ENCODE measurements at regions of chr20 and their contacts with region 1.

Region 1: DNA sequence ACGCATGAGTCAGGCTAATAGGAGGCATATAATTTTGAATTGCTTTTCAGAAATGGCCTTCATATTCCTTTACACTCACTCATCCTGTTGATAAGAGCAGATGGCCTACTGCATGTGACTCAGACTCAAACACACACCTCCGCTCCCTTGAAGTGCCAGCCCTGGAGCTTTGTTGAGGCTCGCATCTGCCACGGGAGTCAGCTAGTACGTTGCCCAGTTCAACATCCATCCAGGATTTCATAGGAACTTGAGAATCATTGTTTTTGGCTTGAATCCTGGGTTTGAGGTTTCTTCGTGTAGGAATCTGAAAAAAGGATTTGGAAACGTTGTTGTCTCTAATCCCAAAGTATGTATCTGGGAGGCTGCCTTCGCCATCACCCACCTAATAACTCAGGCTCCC is 87.4 kb upstream of the JAG1 start:
- DNase-seq: peak; percentile 93
- ATAC-seq: peak; percentile 65
- H3K4me3 ChIP-seq: 0 out of 2 replicates have a peak overlapping the region, but pooled peaks have one; percentile 9
- H3K27ac ChIP-seq: peak overlapping the region; percentile 94
- H3K4me1 ChIP-seq: peaks cover 42% of the 10 kb centered on the region
- H3K27me3 ChIP-seq: no peaks in the 10 kb centered on the region
- CTCF ChIP-seq: no peak

Region 2: GRCh38 chr20:10696650-10697049 is 64.6 kb before region 1 on chr20:
- CTCF ChIA-PET with region 1: no interaction called
- POLR2A ChIA-PET with region 1: no interaction called
- intact Hi-C with region 1: no loop called
- DNase-seq: no peak
- ATAC-seq: no peak
- H3K4me3 ChIP-seq: no peak overlapping the region
- H3K27ac ChIP-seq: no peak overlapping the region
- H3K4me1 ChIP-seq: no peaks in the 10 kb centered on the region
- H3K27me3 ChIP-seq: no peaks in the 10 kb centered on the region
- CTCF ChIP-seq: peak; percentile 86

Region 3: GRCh38 chr20:10708351-10709185 is 52.7 kb before region 1 on chr20:
- CTCF ChIA-PET with region 1: interaction called, 7 read pairs
- POLR2A ChIA-PET with region 1: no interaction called
- intact Hi-C with region 1: loop called (anchors 2 kb)
- DNase-seq: peak; percentile 92
- ATAC-seq: peak; percentile 30
- H3K4me3 ChIP-seq: no peak overlapping the region
- H3K27ac ChIP-seq: peak overlapping the region; percentile 79
- H3K4me1 ChIP-seq: peaks cover 52% of the 10 kb centered on the region
- H3K27me3 ChIP-seq: no peaks in the 10 kb centered on the region
- CTCF ChIP-seq: no peak

Region 4: DNA sequence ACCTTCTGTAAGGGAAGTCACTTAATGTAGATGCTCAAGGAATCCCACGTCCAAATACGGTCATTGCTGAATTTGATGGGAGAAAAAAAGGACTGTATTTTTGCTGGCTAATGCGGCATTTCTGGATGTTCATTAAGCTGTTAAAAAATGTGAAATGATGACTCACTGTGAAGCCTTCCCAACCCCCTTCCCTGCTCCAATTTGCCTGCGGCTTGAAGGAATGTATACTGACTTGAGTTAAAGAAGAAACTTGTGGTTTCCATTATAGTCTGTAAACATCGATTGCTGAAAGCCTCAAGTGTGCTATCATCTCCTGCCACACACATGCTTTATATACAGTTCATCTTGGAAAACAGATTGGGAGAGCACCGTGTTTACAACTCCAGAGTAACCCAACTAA is 161.7 kb after region 1 on chr20:
- CTCF ChIA-PET with region 1: no interaction called
- POLR2A ChIA-PET with region 1: no interaction called
- intact Hi-C with region 1: loop called (anchors 1 kb)
- DNase-seq: peak; percentile 97
- ATAC-seq: peak; percentile 79
- H3K4me3 ChIP-seq: peak overlapping the region; percentile 23; the same call in 1 of the 2 replicates
- H3K27ac ChIP-seq: peak overlapping the region; percentile 69
- H3K4me1 ChIP-seq: peaks cover 64% of the 10 kb centered on the region
- H3K27me3 ChIP-seq: no peaks in the 10 kb centered on the region
- CTCF ChIP-seq: no peak

Region 5: GRCh38 chr20:11020712-11021111 is 259.5 kb after region 1 on chr20:
- CTCF ChIA-PET with region 1: no interaction called
- POLR2A ChIA-PET with region 1: no interaction called
- intact Hi-C with region 1: loop called (anchors 5 kb)
- DNase-seq: peak; percentile 49
- ATAC-seq: peak; percentile 85
- H3K4me3 ChIP-seq: no peak overlapping the region
- H3K27ac ChIP-seq: 0 out of 2 replicates have a peak overlapping the region, but pooled peaks have one; percentile 4
- H3K4me1 ChIP-seq: peaks cover 12% of the 10 kb centered on the region; the same call in 1 of the 2 replicates
- H3K27me3 ChIP-seq: no peaks in the 10 kb centered on the region
- CTCF ChIP-seq: no peak

Region 6: DNA sequence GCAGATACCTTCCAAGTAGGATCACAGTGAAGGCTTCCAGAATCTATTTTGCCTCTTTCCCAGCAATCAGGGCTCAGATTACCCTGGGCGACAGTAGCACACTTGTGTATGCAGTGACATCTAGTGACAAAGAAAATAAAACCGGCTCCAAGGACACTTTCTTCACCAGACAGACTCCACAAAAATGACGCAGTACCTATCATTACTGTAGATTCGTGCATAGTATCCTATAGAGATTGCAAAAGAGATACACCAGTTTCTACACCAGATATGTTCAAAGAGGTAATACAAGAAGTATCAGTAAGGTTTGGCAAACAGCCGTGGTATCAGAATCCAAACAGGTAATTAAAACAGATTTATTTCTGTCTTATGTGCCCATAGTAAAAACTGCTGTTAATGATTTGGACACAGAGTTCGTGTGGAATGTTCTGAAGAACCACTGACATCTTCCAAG is 512.9 kb after region 1 on chr20:
- CTCF ChIA-PET with region 1: no interaction called
- POLR2A ChIA-PET with region 1: no interaction called
- intact Hi-C with region 1: loop called (anchors 1 kb)
- DNase-seq: peak; percentile 89
- ATAC-seq: peak; percentile 97
- H3K4me3 ChIP-seq: no peak overlapping the region
- H3K27ac ChIP-seq: no peak overlapping the region
- H3K4me1 ChIP-seq: peaks cover 7% of the 10 kb centered on the region
- H3K27me3 ChIP-seq: no peaks in the 10 kb centered on the region
- CTCF ChIP-seq: peak; percentile 93